Lower leg skin (tissue), 4 donors: ENCODE measurements at regions of chr3 and their contacts with region 1.

Region 1: DNA sequence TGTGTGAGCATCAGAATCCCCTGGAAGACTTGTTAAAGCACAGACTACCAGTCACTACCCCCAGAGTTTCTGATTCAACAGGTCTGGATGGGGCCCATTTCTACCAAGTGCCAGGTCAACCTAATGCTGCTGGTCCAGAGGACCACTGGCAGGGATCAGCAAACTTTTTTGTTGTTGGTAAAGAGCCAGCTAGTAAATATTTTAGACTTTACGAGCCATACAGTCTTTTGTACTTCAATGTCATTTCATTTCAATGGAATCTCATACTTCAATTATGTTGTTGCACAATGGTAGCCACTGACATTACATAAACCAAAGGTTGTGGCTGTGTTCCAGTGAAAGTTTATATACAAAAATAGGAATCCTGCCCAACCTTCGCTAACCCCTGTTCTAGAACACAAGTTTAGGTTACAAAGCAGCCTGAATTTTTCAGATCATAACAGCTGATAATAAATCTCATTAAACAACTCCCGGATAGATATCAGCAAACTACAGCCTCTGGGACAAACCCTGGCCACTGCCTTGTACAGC is 28.7 kb downstream of the ULK4 start:
- DNase-seq: no peak
- H3K4me3 ChIP-seq: no peak overlapping the region
- CTCF ChIP-seq: no peak
- POLR2A ChIP-seq: no peak

Region 2: GRCh38 chr3:41961750-41962679 is 28.8 kb after region 1 on chr3 and contains the start of gene ULK4:
- intact Hi-C with region 1: no loop called
- DNase-seq: peak; percentile 97 to 99
- H3K4me3 ChIP-seq: peak within 1 kb of the TSS; percentile 71
- CTCF ChIP-seq: peak in 1 of 3 donors; percentile 5
- POLR2A ChIP-seq: no peak
- total RNA-seq, gene ULK4: 3.2 to 18.7 (median 12.6) TPM

Region 3: GRCh38 chr3:42317137-42317536 is 383.9 kb after region 1 on chr3:
- intact Hi-C with region 1: loop called (anchors 10 kb)
- DNase-seq: no peak
- H3K4me3 ChIP-seq: no peak overlapping the region
- CTCF ChIP-seq: no peak
- POLR2A ChIP-seq: no peak